ENCODE measurements at regions of chr14 and their contacts with region 1.

Region 1: DNA sequence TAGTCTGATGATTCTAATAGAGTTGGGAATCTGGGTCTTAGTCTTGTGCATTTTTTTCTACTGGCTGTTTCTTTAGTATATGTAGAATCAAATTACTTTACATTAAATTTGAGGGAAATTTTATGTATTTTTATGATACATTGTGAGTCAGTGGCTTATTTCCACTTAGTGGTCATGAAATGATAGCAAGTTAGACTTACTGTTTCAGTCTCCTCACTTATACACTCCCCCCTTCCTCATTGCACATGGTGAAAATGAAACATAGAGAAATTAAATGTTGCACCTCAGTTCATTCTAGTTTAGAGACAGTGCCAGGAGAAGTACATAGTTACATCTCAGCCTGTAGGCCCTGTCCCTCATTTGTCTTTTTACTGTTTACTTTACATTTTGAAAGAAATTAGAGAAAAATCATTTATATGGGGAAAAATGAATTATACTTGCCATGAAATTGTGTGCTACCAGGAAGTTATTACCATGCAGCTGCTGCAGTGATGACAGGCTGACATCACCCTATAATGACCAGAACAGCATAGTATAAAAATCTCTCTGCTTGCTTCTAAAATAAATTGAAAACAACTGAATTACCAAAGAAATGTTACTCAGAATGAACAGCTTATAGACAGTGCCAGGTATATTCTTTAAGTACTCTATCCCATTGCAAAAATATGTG is 113.2 kb downstream of the TRMT5 start:
- DNase-seq: no peak
- H3K4me3 ChIP-seq: no peak overlapping the region
- H3K27ac ChIP-seq: no peak overlapping the region
- H3K4me1 ChIP-seq: no peaks in the 10 kb centered on the region
- H3K27me3 ChIP-seq: no peaks in the 10 kb centered on the region
- CTCF ChIP-seq: no peak
- EP300 ChIP-seq: no peak
- POLR2A ChIP-seq: no peak

Region 2: DNA sequence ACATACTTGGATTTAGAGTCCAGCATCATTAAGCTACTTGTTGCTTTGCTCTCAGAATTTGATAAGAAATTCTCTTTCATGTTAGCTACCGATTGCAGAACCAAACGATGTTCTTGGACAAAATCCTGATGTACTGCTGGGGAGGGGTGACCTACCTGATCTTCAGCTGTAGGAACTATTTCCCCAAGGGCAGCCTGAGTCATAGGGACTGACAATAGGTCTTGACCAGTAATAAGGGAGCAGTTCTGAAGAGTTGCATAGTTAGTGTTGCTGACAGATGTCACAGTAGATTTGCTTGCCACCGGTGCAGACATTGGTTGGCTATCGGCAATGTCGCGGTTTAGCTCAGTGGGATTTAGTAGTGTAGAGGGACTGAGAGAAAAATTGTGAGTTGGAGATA is 154.1 kb before region 1 on chr14:
- intact Hi-C with region 1: no loop called
- DNase-seq: no peak
- H3K4me3 ChIP-seq: no peak overlapping the region
- H3K27ac ChIP-seq: no peak overlapping the region
- H3K4me1 ChIP-seq: no peaks in the 10 kb centered on the region
- H3K27me3 ChIP-seq: no peaks in the 10 kb centered on the region
- CTCF ChIP-seq: no peak
- EP300 ChIP-seq: no peak
- POLR2A ChIP-seq: no peak

Region 3: DNA sequence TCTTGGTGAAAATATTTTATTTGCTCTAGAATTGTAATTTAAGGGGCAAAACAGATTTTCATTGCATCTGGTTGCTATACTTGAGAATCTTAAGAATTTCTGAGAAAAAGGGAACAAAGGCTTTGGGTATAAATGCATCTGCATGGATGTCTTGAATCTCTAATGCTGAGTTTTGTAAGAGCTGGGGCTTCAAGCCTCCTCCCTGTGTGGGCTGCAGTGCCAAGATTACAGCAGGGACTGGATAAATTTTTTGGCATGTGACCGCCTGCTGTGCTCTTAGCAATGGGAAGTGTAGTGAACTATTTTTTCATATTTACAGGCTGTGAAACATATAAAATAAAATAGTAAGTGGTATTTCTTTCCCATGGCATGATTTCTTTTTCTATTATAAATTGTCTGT is 183.4 kb after region 1 on chr14:
- intact Hi-C with region 1: loop called in 1 of 4 experiments (anchors 5 kb)
- DNase-seq: peak in 1 of 5 donors; percentile 18
- H3K4me3 ChIP-seq: no peak overlapping the region
- H3K27ac ChIP-seq: no peak overlapping the region
- H3K4me1 ChIP-seq: no peaks in the 10 kb centered on the region
- H3K27me3 ChIP-seq: no peaks in the 10 kb centered on the region
- CTCF ChIP-seq: no peak
- EP300 ChIP-seq: no peak
- POLR2A ChIP-seq: no peak

Measured in ovary (tissue), 10 donors.